Right ventricle myocardium superior (tissue), 1 donor: ENCODE measurements at regions of chr7 and their contacts with region 1.

Region 1: GRCh38 chr7:111752022-111752582 is 189.8 kb upstream of the IMMP2L start:
- DNase-seq: peak; percentile 69
- ATAC-seq: peak; percentile 65

Region 2: GRCh38 chr7:111855161-111855856 is 103.2 kb after region 1 on chr7:
- intact Hi-C with region 1: loop called (anchors 5 kb)
- DNase-seq: no peak
- ATAC-seq: peak; percentile 90

Region 3: GRCh38 chr7:112140600-112140999 is 388.5 kb after region 1 on chr7:
- intact Hi-C with region 1: no loop called
- DNase-seq: no peak
- ATAC-seq: no peak

Region 4: DNA sequence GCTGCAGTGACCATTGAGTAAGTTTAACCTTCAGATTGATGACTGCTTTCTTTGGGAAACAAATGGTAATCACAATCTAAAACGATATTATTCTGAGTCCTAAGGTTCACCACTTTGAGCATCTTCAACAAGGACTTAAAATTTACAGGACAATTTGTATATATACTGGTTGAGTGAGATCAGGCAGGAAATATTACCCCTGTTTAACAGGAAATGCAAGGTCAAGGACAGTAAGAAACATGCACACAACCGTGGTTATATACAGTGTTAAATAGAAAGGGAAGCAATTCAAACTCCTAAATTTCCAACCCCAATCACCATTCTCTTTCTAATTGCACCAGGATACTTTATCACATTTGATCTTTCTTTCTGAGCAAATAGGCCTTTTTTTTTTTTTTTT is 550.5 kb after region 1 on chr7:
- intact Hi-C with region 1: no loop called
- DNase-seq: no peak
- ATAC-seq: no peak

Region 5: GRCh38 chr7:112405286-112405685 is 653.2 kb after region 1 on chr7:
- intact Hi-C with region 1: loop called (anchors 5 kb)
- DNase-seq: no peak
- ATAC-seq: no peak

Region 6: GRCh38 chr7:112495810-112496462 is 743.8 kb after region 1 on chr7:
- intact Hi-C with region 1: loop called (anchors 10 kb)
- DNase-seq: no peak
- ATAC-seq: peak; percentile 90